PC-3 (cell line): ENCODE measurements at regions of chr6 and their contacts with region 1.

Region 1: DNA sequence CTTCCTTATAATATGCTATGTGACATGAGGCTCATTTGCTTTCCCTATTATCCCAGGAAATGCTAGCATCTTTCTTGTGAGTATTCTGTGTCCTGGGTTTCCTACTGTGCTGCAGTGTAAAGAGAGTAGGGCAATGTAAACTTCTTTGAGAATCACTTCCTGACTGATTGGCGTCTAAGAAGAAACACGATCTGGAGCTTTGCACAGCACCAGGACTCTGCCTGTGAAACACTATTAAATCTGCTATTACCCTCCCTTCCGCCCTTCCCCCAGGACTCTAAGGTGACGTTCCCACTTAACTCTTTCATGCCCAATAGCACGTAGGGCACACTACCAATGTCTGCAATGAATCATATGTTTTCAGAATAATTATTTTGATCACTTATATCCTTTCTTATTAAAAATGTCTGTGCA is 607.3 kb upstream of the CITED2 start:
- DNase-seq: peak; percentile 74
- ATAC-seq: peak; percentile 84
- H3K4me3 ChIP-seq: peak overlapping the region; percentile 33; the same call in 1 of the 2 replicates
- H3K27ac ChIP-seq: peak overlapping the region; percentile 75
- H3K4me1 ChIP-seq: peaks cover 53% of the 10 kb centered on the region
- H3K27me3 ChIP-seq: no peaks in the 10 kb centered on the region
- CTCF ChIP-seq: no peak

Region 2: GRCh38 chr6:139655790-139656687 is 325.7 kb before region 1 on chr6:
- CTCF ChIA-PET with region 1: no interaction called
- POLR2A ChIA-PET with region 1: no interaction called
- intact Hi-C with region 1: loop called (anchors 2 kb)
- DNase-seq: peak; percentile 77
- ATAC-seq: peak; percentile 99
- H3K4me3 ChIP-seq: no peak overlapping the region; the same call in 1 of the 2 replicates
- H3K27ac ChIP-seq: peak overlapping the region; percentile 59
- H3K4me1 ChIP-seq: peaks cover 16% of the 10 kb centered on the region
- H3K27me3 ChIP-seq: no peaks in the 10 kb centered on the region
- CTCF ChIP-seq: no peak

Region 3: GRCh38 chr6:139764498-139764986 is 217.2 kb before region 1 on chr6:
- CTCF ChIA-PET with region 1: no interaction called
- POLR2A ChIA-PET with region 1: no interaction called
- intact Hi-C with region 1: loop called (anchors 10 kb)
- DNase-seq: peak; percentile 88
- ATAC-seq: peak; percentile 84
- H3K4me3 ChIP-seq: peak overlapping the region; percentile 43; the same call in 1 of the 2 replicates
- H3K27ac ChIP-seq: peak overlapping the region; percentile 79
- H3K4me1 ChIP-seq: peaks cover 47% of the 10 kb centered on the region
- H3K27me3 ChIP-seq: no peaks in the 10 kb centered on the region
- CTCF ChIP-seq: no peak

Region 4: DNA sequence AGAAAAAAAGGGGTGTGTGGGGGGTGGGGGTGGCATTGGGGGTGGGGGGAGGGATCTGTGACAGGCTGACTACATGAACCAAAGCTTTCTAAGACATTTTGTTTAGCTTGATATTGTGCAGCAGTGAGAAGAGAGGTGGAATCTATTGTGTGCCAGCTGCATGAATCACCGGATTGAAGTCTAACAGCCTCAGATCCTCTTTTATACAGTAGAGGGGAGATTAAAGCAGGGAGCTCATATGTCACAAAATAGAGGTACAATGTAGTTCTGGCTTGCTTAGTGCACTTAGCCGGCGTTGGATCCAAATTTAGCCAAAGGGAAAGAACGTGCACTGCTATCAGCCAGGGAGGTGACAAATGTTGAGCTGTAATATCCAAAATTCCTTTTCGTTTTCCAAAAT is 203.1 kb before region 1 on chr6:
- CTCF ChIA-PET with region 1: no interaction called
- POLR2A ChIA-PET with region 1: no interaction called
- intact Hi-C with region 1: no loop called
- DNase-seq: peak; percentile 26
- ATAC-seq: peak; percentile 56; the same call in 1 of the 2 replicates
- H3K4me3 ChIP-seq: no peak overlapping the region
- H3K27ac ChIP-seq: no peak overlapping the region
- H3K4me1 ChIP-seq: no peaks in the 10 kb centered on the region
- H3K27me3 ChIP-seq: no peaks in the 10 kb centered on the region
- CTCF ChIP-seq: no peak

Region 5: GRCh38 chr6:139912735-139913400 is 68.9 kb before region 1 on chr6:
- CTCF ChIA-PET with region 1: no interaction called
- POLR2A ChIA-PET with region 1: no interaction called
- intact Hi-C with region 1: loop called (anchors 5 kb)
- DNase-seq: peak; percentile 3
- ATAC-seq: no peak
- H3K4me3 ChIP-seq: no peak overlapping the region
- H3K27ac ChIP-seq: no peak overlapping the region
- H3K4me1 ChIP-seq: peaks cover 8% of the 10 kb centered on the region
- H3K27me3 ChIP-seq: no peaks in the 10 kb centered on the region
- CTCF ChIP-seq: no peak

Region 6: DNA sequence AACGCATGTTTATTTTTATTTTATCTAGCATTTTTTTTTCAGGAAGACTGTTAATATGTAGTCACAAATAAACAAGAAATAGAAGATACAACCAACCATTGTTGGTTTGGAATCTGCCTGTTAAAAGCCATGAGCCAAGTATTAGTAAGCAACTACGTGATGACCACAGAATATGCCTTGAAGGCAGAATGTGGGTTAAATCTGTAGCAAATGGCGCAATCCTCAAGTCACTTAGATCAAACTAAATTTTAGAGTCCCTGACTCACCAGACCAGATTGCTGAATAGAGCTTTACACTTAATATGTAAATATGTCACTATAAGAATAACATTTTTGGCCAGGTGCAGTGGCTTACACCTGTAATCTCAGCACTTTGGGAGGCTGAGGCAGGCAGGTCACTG is 192.7 kb after region 1 on chr6:
- CTCF ChIA-PET with region 1: no interaction called
- POLR2A ChIA-PET with region 1: no interaction called
- intact Hi-C with region 1: loop called (anchors 5 kb)
- DNase-seq: peak; percentile 97
- ATAC-seq: peak; percentile 93
- H3K4me3 ChIP-seq: peak overlapping the region; percentile 46; the same call in 1 of the 2 replicates
- H3K27ac ChIP-seq: peak overlapping the region; percentile 80
- H3K4me1 ChIP-seq: peaks cover 24% of the 10 kb centered on the region
- H3K27me3 ChIP-seq: no peaks in the 10 kb centered on the region
- CTCF ChIP-seq: no peak

Region 7: GRCh38 chr6:140276719-140277118 is 294.9 kb after region 1 on chr6:
- CTCF ChIA-PET with region 1: no interaction called
- POLR2A ChIA-PET with region 1: no interaction called
- intact Hi-C with region 1: loop called (anchors 1 kb)
- DNase-seq: peak; percentile 52
- ATAC-seq: peak; percentile 49
- H3K4me3 ChIP-seq: no peak overlapping the region
- H3K27ac ChIP-seq: peak overlapping the region; percentile 29; the same call in 1 of the 2 replicates
- H3K4me1 ChIP-seq: peaks cover 16% of the 10 kb centered on the region
- H3K27me3 ChIP-seq: no peaks in the 10 kb centered on the region
- CTCF ChIP-seq: no peak